ENCODE measurements at regions of chr6 and their contacts with region 1.

Region 1: GRCh38 chr6:42075159-42075838 is 25.0 kb downstream of the TAF8 start:
- DNase-seq: peak; percentile 86
- H3K4me3 ChIP-seq: no peak overlapping the region
- H3K27ac ChIP-seq: no peak overlapping the region
- H3K4me1 ChIP-seq: no peaks in the 10 kb centered on the region
- H3K27me3 ChIP-seq: no peaks in the 10 kb centered on the region
- CTCF ChIP-seq: peak; percentile 40 to 81 (median 75)
- EP300 ChIP-seq: no peak
- POLR2A ChIP-seq: no peak

Region 2: GRCh38 chr6:42166444-42167141 is 91.3 kb after region 1 on chr6:
- intact Hi-C with region 1: loop called (anchors 1 kb)
- DNase-seq: no peak
- H3K4me3 ChIP-seq: no peak overlapping the region
- H3K27ac ChIP-seq: no peak overlapping the region
- H3K4me1 ChIP-seq: no peaks in the 10 kb centered on the region
- H3K27me3 ChIP-seq: no peaks in the 10 kb centered on the region
- CTCF ChIP-seq: peak; percentile 53 to 96 (median 90)
- EP300 ChIP-seq: no peak
- POLR2A ChIP-seq: no peak

Region 3: DNA sequence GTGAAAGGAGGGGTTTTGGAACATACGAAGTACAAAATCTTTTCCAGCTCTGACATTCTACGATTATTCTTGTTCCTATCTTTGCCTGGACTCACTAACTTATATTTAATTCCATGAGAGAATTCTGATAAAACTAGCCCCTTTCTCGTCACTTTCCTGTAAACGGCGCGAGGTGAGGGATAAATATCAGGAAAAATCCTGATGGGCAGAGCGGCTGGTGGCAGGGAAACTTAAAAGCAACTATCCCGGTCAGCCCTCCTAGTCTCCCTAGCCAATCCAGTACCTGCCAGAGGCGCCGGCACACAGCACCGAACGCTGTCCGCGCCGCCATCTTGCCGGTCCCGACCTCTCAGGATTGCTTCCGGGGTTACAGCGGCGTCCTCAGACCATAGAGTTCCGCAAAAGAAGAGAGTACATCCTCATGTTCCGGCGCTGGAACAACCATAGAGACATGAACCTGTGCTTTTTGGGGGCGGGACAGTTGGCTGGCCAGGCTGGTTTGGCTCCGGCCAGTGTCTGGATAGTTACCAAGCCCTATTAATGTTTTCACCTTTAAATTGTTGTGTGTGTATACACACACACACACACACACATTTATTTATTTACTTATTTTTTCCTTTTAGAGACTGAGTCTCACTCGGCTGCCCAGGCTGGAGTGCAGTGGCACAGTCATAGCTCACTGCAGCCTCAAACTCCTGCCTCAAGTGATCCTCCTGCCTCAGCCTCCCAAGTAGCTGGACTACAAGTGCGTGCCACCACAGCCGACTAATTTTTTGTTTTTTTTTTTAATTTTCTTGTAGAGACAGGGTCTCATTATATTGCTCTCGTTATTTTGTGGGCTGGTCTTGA is 142.4 kb after region 1 on chr6 and contains the start of gene MRPS10:
- intact Hi-C with region 1: loop called (anchors 5 kb)
- DNase-seq: peak; percentile 96
- H3K4me3 ChIP-seq: peak within 1 kb of the TSS; percentile 60 to 73 (median 72)
- H3K27ac ChIP-seq: peak within 1 kb of the TSS; percentile 78 to 86 (median 82)
- H3K4me1 ChIP-seq: peaks cover 0 to 15% (median 13%) of the 10 kb centered on the region in 4 donors
- H3K27me3 ChIP-seq: no peaks in the 10 kb centered on the region
- CTCF ChIP-seq: no peak
- EP300 ChIP-seq: no peak
- POLR2A ChIP-seq: peak; percentile 86 to 92
- total RNA-seq, gene MRPS10: 27.7 to 35.2 (median 32.8) TPM

Measured in sigmoid colon (tissue), 7 donors.